ENCODE measurements at regions of chr1 and their contacts with region 1.

Region 1: DNA sequence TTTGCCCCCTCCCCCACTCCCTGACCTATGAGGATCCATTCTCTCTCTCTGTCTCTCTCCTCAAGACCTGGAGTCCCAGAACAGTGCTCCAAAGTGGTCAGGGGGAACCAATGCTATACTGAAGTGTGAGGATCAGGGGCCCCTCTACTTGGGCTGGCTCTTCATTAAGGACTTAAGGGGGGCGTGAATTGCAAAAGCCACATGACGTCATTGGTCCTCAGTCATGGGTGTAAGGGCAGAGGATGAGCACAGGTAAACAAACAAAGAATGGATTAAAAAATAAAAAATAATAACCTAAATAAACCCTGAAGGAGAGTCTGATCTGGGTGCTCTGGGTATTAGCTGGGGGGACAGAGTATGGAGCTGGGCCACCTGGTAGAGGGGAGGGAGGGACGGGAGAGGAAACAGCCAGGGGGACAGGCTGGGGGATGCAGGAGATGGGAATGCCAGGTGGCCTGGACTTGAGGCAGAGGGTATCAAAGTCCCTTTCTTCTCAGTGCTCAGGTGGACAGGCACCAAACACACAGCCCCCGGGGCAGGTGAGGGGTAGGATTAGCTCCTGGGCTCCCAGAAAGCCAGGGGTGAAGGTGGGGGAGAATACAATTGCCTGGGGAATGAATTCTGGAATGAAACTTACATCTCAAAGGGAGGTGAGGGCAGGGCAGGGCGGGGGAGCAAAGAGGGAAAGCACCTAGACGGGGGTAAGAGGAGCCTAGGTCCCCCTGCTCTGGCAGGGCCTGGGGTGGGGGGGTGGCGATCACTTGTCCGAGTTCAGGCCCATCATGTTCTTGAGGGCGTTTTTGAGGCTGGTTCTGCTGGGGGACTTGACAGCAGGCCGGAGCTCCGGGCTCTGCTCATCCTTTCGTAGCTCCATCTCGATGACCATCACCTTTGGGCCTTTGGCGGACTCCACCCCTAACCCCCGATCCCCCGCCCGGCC is 4.6 kb downstream of the MPZ start:
- DNase-seq: no peak
- ATAC-seq: no peak
- H3K4me3 ChIP-seq: no peak overlapping the region
- H3K27ac ChIP-seq: no peak overlapping the region
- H3K4me1 ChIP-seq: peaks cover 10% of the 10 kb centered on the region; the same call in 2 of the 3 replicates
- CTCF ChIP-seq: no peak
- EP300 ChIP-seq: no peak
- POLR2A ChIP-seq: no peak
- RAD21 ChIP-seq: no peak

Region 2: DNA sequence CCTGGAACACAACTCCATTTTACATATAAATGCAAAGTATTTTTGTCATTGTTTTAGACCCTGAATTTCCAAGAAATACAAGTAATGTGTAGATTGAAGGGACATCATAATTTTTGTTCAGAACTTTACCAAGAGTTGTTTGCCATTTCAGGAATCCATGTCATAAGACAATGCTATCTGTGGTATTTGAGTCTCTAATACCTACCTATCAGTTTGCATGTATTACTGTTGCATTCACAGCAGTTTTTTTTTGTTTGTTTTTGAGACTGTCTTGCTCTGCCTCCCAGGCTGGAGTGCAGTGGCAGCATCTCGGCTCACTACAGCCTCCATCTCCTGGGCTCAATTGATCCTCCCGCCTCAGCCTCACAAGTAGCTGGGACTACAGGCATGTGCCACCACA is 12.6 kb before region 1 on chr1:
- CTCF ChIA-PET with region 1: interaction called, 15 read pairs
- POLR2A ChIA-PET with region 1: no interaction called
- DNase-seq: no peak
- ATAC-seq: no peak
- H3K4me3 ChIP-seq: no peak overlapping the region
- H3K27ac ChIP-seq: no peak overlapping the region
- H3K4me1 ChIP-seq: no peaks in the 10 kb centered on the region
- CTCF ChIP-seq: no peak
- EP300 ChIP-seq: no peak
- POLR2A ChIP-seq: no peak
- RAD21 ChIP-seq: no peak

Region 3: DNA sequence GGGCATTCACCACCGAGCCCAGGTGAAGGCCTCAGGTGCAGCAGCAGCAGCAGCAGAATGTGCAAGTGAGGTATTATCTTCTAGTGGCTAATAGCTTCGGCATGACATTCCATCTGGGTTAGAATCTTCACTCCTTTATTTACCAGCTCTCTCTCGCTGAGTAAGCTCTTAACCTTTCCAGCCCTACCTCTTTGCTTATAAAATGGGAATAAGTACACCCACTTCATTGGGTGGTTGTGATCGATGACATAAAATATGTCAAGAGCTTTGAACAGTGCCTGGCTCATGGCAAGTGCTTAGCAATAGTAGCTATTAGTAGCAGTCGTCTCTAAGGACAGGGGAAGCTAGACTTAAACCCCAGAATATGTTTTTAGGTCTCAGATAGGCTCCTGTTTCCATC is 913.8 kb after region 1 on chr1:
- CTCF ChIA-PET with region 1: no interaction called
- POLR2A ChIA-PET with region 1: no interaction called
- DNase-seq: no peak
- ATAC-seq: no peak
- H3K4me3 ChIP-seq: no peak overlapping the region
- H3K27ac ChIP-seq: no peak overlapping the region
- H3K4me1 ChIP-seq: no peaks in the 10 kb centered on the region
- CTCF ChIP-seq: no peak
- EP300 ChIP-seq: no peak
- POLR2A ChIP-seq: no peak
- RAD21 ChIP-seq: no peak

Measured in A549 (cell line).